A549 (cell line): ENCODE measurements at regions of chr10 and their contacts with region 1.

Region 1: DNA sequence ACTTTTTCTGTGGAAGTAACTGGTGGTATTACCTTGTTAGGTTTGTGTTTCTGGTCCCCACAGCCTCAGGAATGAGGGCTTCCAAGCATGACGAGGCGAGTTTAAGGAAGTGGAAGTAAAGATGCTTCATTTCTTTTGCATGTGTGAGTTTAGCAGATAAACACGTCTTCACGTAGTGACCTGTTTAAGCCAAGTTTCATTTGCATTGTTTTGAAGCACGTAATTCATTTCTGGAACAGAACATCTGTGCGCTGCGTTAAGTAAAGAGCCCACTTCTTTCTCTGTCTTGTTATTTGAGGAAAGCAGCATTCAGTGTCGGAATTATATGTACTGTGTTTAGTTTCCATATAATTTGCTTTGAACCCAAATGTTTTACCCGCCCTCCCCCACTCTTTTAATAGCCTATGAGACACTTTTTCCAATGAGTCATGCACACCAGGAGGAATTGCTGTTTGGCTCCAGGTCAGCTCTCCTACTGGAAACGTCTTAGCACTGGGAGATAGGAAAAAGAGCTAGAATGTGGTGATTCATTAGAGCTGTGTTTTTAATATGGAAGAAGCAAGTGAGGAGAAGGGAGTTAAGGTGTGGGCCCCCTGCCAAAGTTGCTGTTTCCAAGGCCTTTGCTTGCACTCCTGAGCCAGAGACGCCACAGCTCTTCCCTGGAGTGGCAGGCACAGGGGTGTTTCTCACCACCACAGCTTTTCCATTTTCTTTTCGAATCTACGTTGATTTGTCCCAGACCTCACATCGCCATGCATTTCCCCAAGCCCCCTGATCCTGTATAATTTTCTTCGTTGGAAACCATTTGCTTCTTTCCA is 36.8 kb downstream of the BTBD16 start:
- DNase-seq: peak; percentile 91 to 93
- ATAC-seq: peak; percentile 68 to 73
- H3K4me3 ChIP-seq: no peak overlapping the region
- H3K27ac ChIP-seq: peak overlapping the region; percentile 88 to 94
- H3K4me1 ChIP-seq: peaks cover 53% of the 10 kb centered on the region
- CTCF ChIP-seq: no peak
- EP300 ChIP-seq: peak; percentile 29 to 58; a peak in 3 of 5 replicates
- POLR2A ChIP-seq: no peak
- RAD21 ChIP-seq: peak in 1 of 2 experiments; percentile 27; a peak in 1 of 5 replicates

Region 2: DNA sequence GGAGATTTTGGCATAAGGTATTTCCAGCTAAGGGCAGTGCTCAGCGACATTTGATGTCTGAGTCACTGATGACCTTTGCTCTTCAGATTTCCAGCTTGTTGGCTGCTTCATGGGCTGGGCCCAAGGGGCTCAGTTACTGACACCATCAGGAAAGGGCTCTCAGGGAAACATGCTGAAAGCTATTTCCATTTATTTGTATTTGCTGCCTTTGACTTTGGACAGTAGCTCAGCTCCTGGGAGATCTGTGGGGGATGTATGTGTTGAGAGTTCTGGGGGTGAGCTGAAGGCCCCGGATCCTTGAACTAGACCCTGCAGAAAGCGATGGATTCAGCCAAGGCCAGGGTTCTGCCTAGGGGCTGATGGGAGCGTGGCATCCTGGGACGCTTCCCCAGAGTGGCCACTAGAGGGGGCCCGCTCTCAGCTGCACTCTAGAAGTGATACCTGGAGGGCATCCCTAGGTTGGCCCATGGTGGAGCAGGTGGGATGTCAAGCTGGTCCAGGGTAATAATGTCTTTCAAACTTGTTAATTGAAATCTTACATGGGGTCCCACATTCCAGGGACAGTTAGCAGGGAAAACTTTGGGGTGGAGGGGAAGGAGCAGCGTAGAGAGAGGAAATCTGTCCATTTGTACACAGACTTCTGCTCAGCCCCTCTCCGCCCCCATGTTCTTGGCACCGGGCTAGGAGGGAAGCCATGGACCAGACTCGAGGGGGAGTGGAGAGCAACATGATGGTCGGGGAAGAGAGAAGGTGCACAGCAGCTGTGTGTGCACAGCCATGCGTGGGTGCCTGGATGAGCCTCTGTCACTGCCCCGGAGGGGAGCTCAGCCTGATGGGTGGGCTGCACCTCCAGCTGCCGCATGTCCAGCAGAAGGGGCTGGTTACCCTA is 39.8 kb before region 1 on chr10:
- CTCF ChIA-PET with region 1: no interaction called
- POLR2A ChIA-PET with region 1: no interaction called
- DNase-seq: peak; percentile 61 to 76
- ATAC-seq: peak; percentile 82 to 93
- H3K4me3 ChIP-seq: no peak overlapping the region
- H3K27ac ChIP-seq: peak overlapping the region; percentile 65 to 67; a peak in 5 of 6 replicates
- H3K4me1 ChIP-seq: peaks cover 40% of the 10 kb centered on the region
- CTCF ChIP-seq: peak; percentile 78
- EP300 ChIP-seq: no peak
- POLR2A ChIP-seq: no peak
- RAD21 ChIP-seq: peak; percentile 53 to 64

Region 3: DNA sequence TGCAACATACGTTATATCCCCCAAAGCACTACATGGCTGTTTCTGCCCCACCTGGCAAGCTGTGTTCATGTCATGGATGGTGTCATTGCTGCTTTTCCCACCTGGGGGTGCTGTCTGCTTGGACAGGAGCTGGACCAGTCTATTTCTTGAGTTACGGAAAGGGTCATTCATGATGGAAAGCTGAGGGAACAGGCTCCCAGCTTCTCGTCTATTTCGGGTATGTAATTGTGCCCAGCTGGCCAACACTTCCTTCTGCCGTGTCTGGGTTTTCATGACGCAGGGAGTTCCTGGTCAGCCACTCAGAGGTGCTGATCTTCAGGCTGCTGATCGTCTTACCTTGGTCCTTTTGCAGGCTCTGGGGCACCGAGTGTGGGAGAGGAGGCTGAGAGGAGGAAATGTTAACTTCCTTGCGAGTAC is 28.1 kb before region 1 on chr10:
- CTCF ChIA-PET with region 1: no interaction called
- POLR2A ChIA-PET with region 1: no interaction called
- DNase-seq: peak; percentile 24 to 56
- ATAC-seq: peak; percentile 33 to 70; a peak in 3 of 6 replicates
- H3K4me3 ChIP-seq: no peak overlapping the region
- H3K27ac ChIP-seq: no peak overlapping the region
- H3K4me1 ChIP-seq: peaks cover 10% of the 10 kb centered on the region
- CTCF ChIP-seq: peak; percentile 53
- EP300 ChIP-seq: no peak
- POLR2A ChIP-seq: no peak
- RAD21 ChIP-seq: peak; percentile 59 to 80

Region 4: DNA sequence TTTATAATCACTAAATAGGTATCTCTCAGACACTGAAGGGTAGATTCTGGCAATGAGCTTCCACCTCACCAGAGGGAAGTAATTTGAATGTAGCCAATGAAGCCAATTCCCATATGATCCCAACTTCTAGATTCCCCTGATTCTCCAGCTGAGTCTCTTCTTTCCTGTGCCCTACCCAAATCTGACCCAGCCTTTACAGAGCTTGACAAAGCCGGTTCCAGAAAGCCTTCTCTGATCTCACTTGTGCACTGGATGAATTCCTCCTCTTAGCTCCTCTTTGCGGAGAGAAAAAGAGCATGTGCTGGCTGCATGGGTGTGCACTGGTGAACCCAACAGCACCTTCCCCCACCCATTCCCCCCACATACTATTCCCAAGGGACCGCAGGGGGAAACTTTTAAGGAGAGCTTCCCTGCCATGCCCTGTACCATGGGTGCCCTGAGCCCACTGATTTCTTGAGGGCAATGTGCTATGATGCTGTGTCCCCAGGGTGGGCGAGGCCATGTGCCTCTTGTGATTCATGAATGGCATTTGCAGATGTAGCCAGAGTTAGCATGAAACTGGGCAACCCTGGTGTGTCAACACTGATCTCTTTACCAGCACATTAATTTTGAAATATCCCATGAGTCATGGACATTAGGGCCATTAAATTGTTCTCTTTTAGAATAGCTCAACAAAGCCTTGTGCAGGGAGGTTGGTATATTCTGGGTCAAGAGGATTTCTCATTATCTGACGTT is 16.2 kb after region 1 on chr10:
- CTCF ChIA-PET with region 1: interaction called, 10 read pairs
- POLR2A ChIA-PET with region 1: interaction called, 8 read pairs
- DNase-seq: peak in 1 of 2 experiments; percentile 54
- ATAC-seq: peak; percentile 82 to 84; a peak in 5 of 6 replicates
- H3K4me3 ChIP-seq: no peak overlapping the region
- H3K27ac ChIP-seq: peak overlapping the region; percentile 52 to 54; a peak in 5 of 6 replicates
- H3K4me1 ChIP-seq: peaks cover 15% of the 10 kb centered on the region
- CTCF ChIP-seq: no peak
- EP300 ChIP-seq: no peak
- POLR2A ChIP-seq: no peak
- RAD21 ChIP-seq: no peak

Region 5: GRCh38 chr10:122374237-122374869 is 66.5 kb after region 1 on chr10 and contains the start of gene PLEKHA1:
- CTCF ChIA-PET with region 1: interaction called, 4 read pairs
- POLR2A ChIA-PET with region 1: interaction called, 22 read pairs
- DNase-seq: peak; percentile 90 to 94
- ATAC-seq: peak; percentile 95 to 96
- H3K4me3 ChIP-seq: peak within 1 kb of the TSS; percentile 74
- H3K27ac ChIP-seq: peak within 1 kb of the TSS; percentile 89 to 97
- H3K4me1 ChIP-seq: peaks cover 34% of the 10 kb centered on the region
- CTCF ChIP-seq: no peak
- EP300 ChIP-seq: no peak
- POLR2A ChIP-seq: peak; percentile 82
- RAD21 ChIP-seq: no peak
- polyA plus RNA-seq, gene PLEKHA1: 52.0 and 62.4 TPM in 2 replicates